Activated B cell treated with CpG ODN at 0.5 μM for 24 hours (primary cell): ENCODE measurements at regions of chr1 and their contacts with region 1.

Region 1: GRCh38 chr1:52002038-52002917 is 11.8 kb upstream of the RAB3B start:
- DNase-seq: no peak
- ATAC-seq: peak; percentile 93
- H3K4me3 Mint-ChIP-seq: no peak overlapping the region
- H3K27ac Mint-ChIP-seq: no peak overlapping the region
- H3K4me1 Mint-ChIP-seq: no peaks in the 10 kb centered on the region
- H3K27me3 Mint-ChIP-seq: peaks cover 21% of the 10 kb centered on the region
- CTCF ChIP-seq: no peak

Region 2: GRCh38 chr1:50368179-50369012 is 1633.9 kb before region 1 on chr1:
- CTCF ChIA-PET with region 1: no interaction called
- POLR2A ChIA-PET with region 1: no interaction called
- intact Hi-C with region 1: loop called (anchors 5 kb)
- DNase-seq: no peak
- ATAC-seq: no peak
- H3K4me3 Mint-ChIP-seq: no peak overlapping the region
- H3K27ac Mint-ChIP-seq: no peak overlapping the region
- H3K4me1 Mint-ChIP-seq: no peaks in the 10 kb centered on the region
- H3K27me3 Mint-ChIP-seq: peaks cover 34% of the 10 kb centered on the region
- CTCF ChIP-seq: no peak

Region 3: DNA sequence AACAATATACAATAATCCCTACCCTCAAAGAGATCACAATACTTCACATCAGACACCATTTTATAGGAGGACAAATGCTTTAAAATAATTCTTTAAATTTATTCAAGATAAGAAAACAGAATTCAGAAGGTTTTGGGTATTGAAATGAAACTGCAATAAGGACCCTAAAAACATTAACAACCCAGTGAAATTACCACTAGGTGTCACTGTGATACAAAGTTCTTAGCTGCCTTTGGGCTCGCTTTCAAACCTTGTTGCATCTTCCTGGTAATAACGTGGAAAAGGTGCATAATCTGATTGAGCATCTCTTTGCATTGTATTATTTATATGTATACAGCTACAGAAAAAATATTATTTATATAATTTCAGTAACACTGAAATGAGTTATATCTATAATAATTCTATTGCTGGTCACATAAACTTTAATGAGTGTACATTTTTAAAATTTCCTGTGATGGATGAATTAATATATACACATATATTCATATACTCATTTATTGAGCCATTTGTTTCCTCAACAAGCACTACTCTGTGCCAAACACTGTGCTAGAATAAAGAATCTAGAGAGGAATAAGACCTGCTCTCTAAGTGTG is 1227.4 kb before region 1 on chr1:
- CTCF ChIA-PET with region 1: no interaction called
- POLR2A ChIA-PET with region 1: no interaction called
- intact Hi-C with region 1: loop called (anchors 10 kb)
- DNase-seq: no peak
- ATAC-seq: no peak
- H3K4me3 Mint-ChIP-seq: no peak overlapping the region
- H3K27ac Mint-ChIP-seq: no peak overlapping the region
- H3K4me1 Mint-ChIP-seq: peaks cover 5% of the 10 kb centered on the region
- H3K27me3 Mint-ChIP-seq: no peaks in the 10 kb centered on the region
- CTCF ChIP-seq: peak; percentile 86

Region 4: GRCh38 chr1:51627678-51628077 is 374.6 kb before region 1 on chr1:
- CTCF ChIA-PET with region 1: no interaction called
- POLR2A ChIA-PET with region 1: no interaction called
- intact Hi-C with region 1: loop called (anchors 5 kb)
- DNase-seq: no peak
- ATAC-seq: no peak
- H3K4me3 Mint-ChIP-seq: no peak overlapping the region
- H3K27ac Mint-ChIP-seq: no peak overlapping the region
- H3K4me1 Mint-ChIP-seq: peaks cover 9% of the 10 kb centered on the region
- H3K27me3 Mint-ChIP-seq: no peaks in the 10 kb centered on the region
- CTCF ChIP-seq: no peak

Region 5: GRCh38 chr1:51843948-51844347 is 158.3 kb before region 1 on chr1:
- CTCF ChIA-PET with region 1: no interaction called
- POLR2A ChIA-PET with region 1: no interaction called
- intact Hi-C with region 1: loop called (anchors 5 kb)
- DNase-seq: no peak
- ATAC-seq: no peak
- H3K4me3 Mint-ChIP-seq: no peak overlapping the region
- H3K27ac Mint-ChIP-seq: no peak overlapping the region
- H3K4me1 Mint-ChIP-seq: peaks cover 9% of the 10 kb centered on the region
- H3K27me3 Mint-ChIP-seq: no peaks in the 10 kb centered on the region
- CTCF ChIP-seq: no peak

Region 6: GRCh38 chr1:51897699-51898031 is 104.6 kb before region 1 on chr1:
- CTCF ChIA-PET with region 1: interaction called, 10 read pairs
- POLR2A ChIA-PET with region 1: interaction called, 4 read pairs
- intact Hi-C with region 1: loop called (anchors 1 kb)
- DNase-seq: no peak
- ATAC-seq: no peak
- H3K4me3 Mint-ChIP-seq: no peak overlapping the region
- H3K27ac Mint-ChIP-seq: no peak overlapping the region
- H3K4me1 Mint-ChIP-seq: no peaks in the 10 kb centered on the region
- H3K27me3 Mint-ChIP-seq: peaks cover 57% of the 10 kb centered on the region
- CTCF ChIP-seq: no peak